ENCODE measurements at regions of chr1 and their contacts with region 1.

Region 1: GRCh38 chr1:36175137-36176095 is 19.5 kb downstream of the MAP7D1 start:
- DNase-seq: peak in 1 of 2 experiments; percentile 61
- H3K4me3 ChIP-seq: peak overlapping the region in 2 of 4 experiments; percentile 15 to 48; a peak in 2 of 8 replicates
- H3K27ac ChIP-seq: peak overlapping the region; percentile 5
- H3K4me1 ChIP-seq: peaks cover 5 to 34% (median 28%) of the 10 kb centered on the region in 4 experiments
- H3K27me3 ChIP-seq: no peaks in the 10 kb centered on the region
- CTCF ChIP-seq: no peak
- EP300 ChIP-seq: no peak
- POLR2A ChIP-seq: no peak
- RAD21 ChIP-seq: no peak

Region 2: GRCh38 chr1:36155408-36156328 is 19.7 kb before region 1 on chr1 and contains the start of gene MAP7D1:
- CTCF ChIA-PET with region 1: interaction called, 162 read pairs
- POLR2A ChIA-PET with region 1: interaction called, 44 read pairs
- DNase-seq: peak in 1 of 2 experiments; percentile 93
- H3K4me3 ChIP-seq: peak within 1 kb of the TSS; percentile 64 to 96 (median 76)
- H3K27ac ChIP-seq: peak within 1 kb of the TSS; percentile 49
- H3K4me1 ChIP-seq: peaks cover 2 to 28% (median 14%) of the 10 kb centered on the region in 4 experiments
- H3K27me3 ChIP-seq: peaks cover 11 to 29% (median 25%) of the 10 kb centered on the region in 4 experiments
- CTCF ChIP-seq: no peak
- EP300 ChIP-seq: peak in 1 of 2 experiments; percentile 70; a peak in 2 of 3 replicates
- POLR2A ChIP-seq: peak in 1 of 2 experiments; percentile 37; a peak in 1 of 3 replicates
- RAD21 ChIP-seq: no peak
- total RNA-seq, gene MAP7D1: 52.4 and 55.1 TPM in 2 replicates

Region 3: DNA sequence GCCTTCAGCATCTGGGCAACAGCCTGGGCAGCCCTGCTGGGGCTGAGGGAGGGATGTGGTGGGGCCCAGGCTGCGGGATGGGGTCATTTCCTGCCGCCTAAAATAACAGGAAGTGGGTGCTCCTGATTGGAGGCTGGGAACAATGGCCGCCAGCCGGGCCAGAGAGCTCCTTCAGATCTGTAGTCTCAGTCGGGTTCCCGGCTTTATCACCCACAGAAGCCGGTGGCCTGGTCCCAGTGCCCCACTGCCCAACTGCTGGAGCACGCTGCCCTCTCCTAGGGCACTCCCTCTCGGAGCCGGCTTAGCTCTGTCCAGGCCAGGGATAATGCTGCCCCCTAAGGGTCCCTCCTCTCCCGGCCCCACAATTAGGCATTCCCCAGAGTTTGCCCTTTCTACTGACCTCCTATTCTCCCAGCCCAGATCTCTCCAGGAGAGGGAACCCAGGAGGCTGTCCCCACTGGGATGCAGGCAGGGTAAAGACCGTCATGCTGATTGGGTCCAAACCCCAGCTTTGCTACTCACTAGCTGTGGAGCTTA is 14.4 kb before region 1 on chr1:
- CTCF ChIA-PET with region 1: interaction called, 162 read pairs
- POLR2A ChIA-PET with region 1: interaction called, 44 read pairs
- DNase-seq: peak in 1 of 2 experiments; percentile 82
- H3K4me3 ChIP-seq: peak overlapping the region; percentile 29 to 60 (median 48)
- H3K27ac ChIP-seq: peak overlapping the region; percentile 89; the same call in 1 of the 2 replicates
- H3K4me1 ChIP-seq: peaks cover 0 to 22% (median 13%) of the 10 kb centered on the region in 4 experiments; a peak in 6 of 7 replicates
- H3K27me3 ChIP-seq: no peaks in the 10 kb centered on the region
- CTCF ChIP-seq: peak; percentile 54 to 69 (median 59)
- EP300 ChIP-seq: no peak
- POLR2A ChIP-seq: peak; percentile 93 to 96
- RAD21 ChIP-seq: peak; percentile 42 to 45

Measured in H1 (cell line).